ENCODE measurements at regions of chr18 and their contacts with region 1.

Region 1: GRCh38 chr18:47883771-47884413 is 46.6 kb downstream of the SMAD2 start:
- DNase-seq: peak; percentile 40
- H3K4me3 Mint-ChIP-seq: peak overlapping the region; percentile 2
- H3K27ac Mint-ChIP-seq: peak overlapping the region; percentile 88
- H3K4me1 Mint-ChIP-seq: peaks cover 52% of the 10 kb centered on the region
- H3K27me3 Mint-ChIP-seq: no peaks in the 10 kb centered on the region
- CTCF ChIP-seq: no peak

Region 2: GRCh38 chr18:47826157-47827074 is 57.5 kb before region 1 on chr18:
- CTCF ChIA-PET with region 1: no interaction called
- intact Hi-C with region 1: loop called (anchors 10 kb)
- DNase-seq: no peak
- H3K4me3 Mint-ChIP-seq: no peak overlapping the region
- H3K27ac Mint-ChIP-seq: peak overlapping the region; percentile 44
- H3K4me1 Mint-ChIP-seq: peaks cover 10% of the 10 kb centered on the region
- H3K27me3 Mint-ChIP-seq: no peaks in the 10 kb centered on the region
- CTCF ChIP-seq: no peak

Region 3: GRCh38 chr18:48002933-48003365 is 119.1 kb after region 1 on chr18:
- CTCF ChIA-PET with region 1: no interaction called
- intact Hi-C with region 1: loop called (anchors 5 kb)
- DNase-seq: peak; percentile 80
- H3K4me3 Mint-ChIP-seq: peak overlapping the region; percentile 32
- H3K27ac Mint-ChIP-seq: peak overlapping the region; percentile 82
- H3K4me1 Mint-ChIP-seq: peaks cover 23% of the 10 kb centered on the region
- H3K27me3 Mint-ChIP-seq: no peaks in the 10 kb centered on the region
- CTCF ChIP-seq: no peak

Measured in Calu3 (cell line).